Esophagus squamous epithelium (tissue), 5 donors: ENCODE measurements at regions of chr1 and their contacts with region 1.

Region 1: GRCh38 chr1:183543619-183544204 is 46.5 kb downstream of the NCF2 start:
- DNase-seq: no peak
- H3K4me3 ChIP-seq: no peak overlapping the region
- H3K27ac ChIP-seq: peak overlapping the region in 1 of 4 donors; percentile 4
- H3K4me1 ChIP-seq: no peaks in the 10 kb centered on the region
- H3K27me3 ChIP-seq: no peaks in the 10 kb centered on the region
- CTCF ChIP-seq: peak in 5 of 6 experiments; percentile 46 to 71 (median 52)
- POLR2A ChIP-seq: no peak

Region 2: GRCh38 chr1:183281553-183282091 is 262.1 kb before region 1 on chr1:
- intact Hi-C with region 1: loop called (anchors 10 kb)
- DNase-seq: peak; percentile 34
- H3K4me3 ChIP-seq: no peak overlapping the region
- H3K27ac ChIP-seq: peak overlapping the region; percentile 8 to 78 (median 58)
- H3K4me1 ChIP-seq: peaks cover 11 to 61% (median 42%) of the 10 kb centered on the region in 3 donors
- H3K27me3 ChIP-seq: no peaks in the 10 kb centered on the region
- CTCF ChIP-seq: peak; percentile 72 to 94 (median 92)
- POLR2A ChIP-seq: no peak

Region 3: DNA sequence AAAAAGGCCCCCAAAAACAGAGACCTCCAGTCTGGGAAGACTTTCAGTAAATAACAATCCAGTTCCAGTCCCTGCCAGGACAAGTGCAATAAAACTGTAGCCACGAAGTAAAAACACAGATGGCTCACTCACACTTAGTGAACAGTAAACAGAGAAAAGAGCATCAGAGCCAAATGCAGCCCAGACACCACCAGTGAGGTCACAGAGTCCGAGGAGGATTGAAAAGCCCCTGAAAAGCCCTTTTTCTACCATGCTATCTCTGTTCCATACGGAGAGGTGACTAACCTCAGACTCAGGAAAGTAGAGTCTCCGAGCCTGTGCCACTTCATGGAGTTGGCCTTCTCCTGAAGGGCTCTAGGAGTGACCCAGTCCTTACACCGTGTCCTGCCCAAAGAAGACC is 409.3 kb after region 1 on chr1:
- intact Hi-C with region 1: no loop called
- DNase-seq: no peak
- H3K4me3 ChIP-seq: no peak overlapping the region
- H3K27ac ChIP-seq: no peak overlapping the region
- H3K4me1 ChIP-seq: no peaks in the 10 kb centered on the region
- H3K27me3 ChIP-seq: no peaks in the 10 kb centered on the region
- CTCF ChIP-seq: no peak
- POLR2A ChIP-seq: no peak